Activated naive CD4-positive, alpha-beta T cell treated with anti-CD3 and anti-CD28 coated beads, Interleukin-2, amount 10 ng/mL, durations not matched to agents 7 days and 5 days (primary cell): ENCODE measurements at regions of chr1 and their contacts with region 1.

Region 1: GRCh38 chr1:12150456-12151200 is 16.2 kb upstream of the TNFRSF1B start:
- DNase-seq: peak; percentile 55
- H3K4me3 Mint-ChIP-seq: peak overlapping the region; percentile 73
- H3K27ac Mint-ChIP-seq: peak overlapping the region; percentile 100
- H3K4me1 Mint-ChIP-seq: peaks cover 91% of the 10 kb centered on the region
- H3K27me3 Mint-ChIP-seq: no peaks in the 10 kb centered on the region

Region 2: DNA sequence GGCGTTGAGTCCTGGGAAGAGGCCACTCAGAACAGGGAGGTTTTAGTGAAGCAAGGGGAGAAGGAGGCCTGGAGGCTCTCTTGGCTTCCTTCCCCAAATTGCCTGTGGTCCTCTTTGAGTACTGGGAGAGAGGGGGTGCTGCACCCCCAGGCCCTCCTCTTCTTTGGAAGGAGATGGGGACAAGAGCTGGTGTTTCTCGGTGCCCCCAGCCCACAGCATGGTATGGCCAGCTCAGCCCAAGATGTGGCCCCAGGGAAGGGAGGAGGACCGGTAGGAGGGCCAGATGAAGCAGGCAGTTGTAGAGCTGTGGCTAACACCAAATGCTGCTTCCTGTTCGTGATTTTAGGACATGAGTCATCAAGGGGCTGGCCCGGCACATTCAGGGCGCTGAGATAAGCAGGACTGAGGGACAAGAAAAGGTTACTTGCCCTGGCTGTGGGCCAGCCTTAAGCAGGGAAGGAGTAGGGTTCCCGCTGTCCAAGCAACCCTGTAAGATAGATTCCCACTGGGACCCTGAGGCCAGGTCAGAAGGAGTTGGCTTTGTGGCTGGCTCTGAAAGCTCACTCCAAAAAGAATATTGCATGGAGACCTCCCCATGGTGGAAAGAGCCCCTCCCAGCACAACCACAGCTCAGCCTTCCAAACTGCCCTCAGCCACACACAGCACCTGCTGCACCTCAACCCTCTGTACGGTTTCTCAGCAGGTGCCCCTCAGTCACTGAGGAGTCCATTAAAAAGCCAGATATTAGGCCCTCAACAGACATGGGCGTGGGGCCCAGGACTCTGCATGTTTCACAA is 11.2 kb after region 1 on chr1:
- CTCF ChIA-PET with region 1: interaction called, 22 read pairs
- DNase-seq: peak; percentile 85
- H3K4me3 Mint-ChIP-seq: peak overlapping the region; percentile 35
- H3K27ac Mint-ChIP-seq: peak overlapping the region; percentile 95
- H3K4me1 Mint-ChIP-seq: peaks cover 93% of the 10 kb centered on the region
- H3K27me3 Mint-ChIP-seq: no peaks in the 10 kb centered on the region